Gastrocnemius medialis (tissue), 4 donors: ENCODE measurements at regions of chr19 and their contacts with region 1.

Region 1: DNA sequence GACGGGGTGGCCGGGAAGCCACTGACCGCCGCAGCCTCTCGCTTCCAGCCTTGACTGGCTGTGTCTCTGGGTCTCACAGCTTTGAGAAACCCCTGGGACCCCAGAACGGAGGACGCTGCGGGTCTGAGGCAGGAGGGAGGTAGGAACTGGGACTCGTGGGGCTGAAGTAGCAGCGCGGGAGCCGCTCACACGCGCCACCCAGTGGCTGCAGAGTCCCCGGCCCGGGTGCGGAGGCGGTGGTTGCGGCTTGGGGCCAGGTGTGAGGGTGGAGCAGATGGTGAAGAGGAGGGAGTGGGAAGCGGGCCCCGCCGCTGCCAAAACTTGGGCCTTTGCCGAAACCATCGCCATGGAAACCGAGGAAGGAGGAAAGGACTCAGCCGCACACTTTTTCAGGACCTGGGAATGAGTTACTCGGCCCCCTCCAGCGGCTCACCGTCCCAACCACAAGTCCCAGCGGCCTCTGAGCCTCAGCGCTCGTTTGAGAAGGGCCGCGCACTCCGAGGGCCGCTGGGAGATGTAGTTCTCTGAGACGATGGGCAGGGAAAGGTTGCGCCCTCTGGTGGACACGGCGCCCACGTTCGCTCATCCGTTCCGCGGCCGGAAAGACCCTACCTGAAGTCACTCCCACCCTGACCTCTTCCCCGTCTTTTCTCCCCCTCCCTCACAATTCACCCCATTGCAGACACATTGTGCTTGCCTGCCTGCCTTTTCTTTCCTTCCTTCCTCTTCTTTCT is 2.2 kb upstream of the SLC17A7 start:
- DNase-seq: peak; percentile 90 to 93
- ATAC-seq: peak; percentile 90 to 91
- H3K4me3 ChIP-seq: peak overlapping the region; percentile 61 to 99 (median 80)
- H3K27ac ChIP-seq: peak overlapping the region; percentile 73 to 85 (median 82)
- H3K4me1 ChIP-seq: no peaks in the 10 kb centered on the region
- H3K27me3 ChIP-seq: peaks cover 34 to 44% (median 37%) of the 10 kb centered on the region in 3 donors
- CTCF ChIP-seq: peak; percentile 78 to 92 (median 89)
- POLR2A ChIP-seq: no peak

Region 2: GRCh38 chr19:49224856-49225255 is 218.7 kb before region 1 on chr19:
- in situ Hi-C with region 1: loop called in 1 of 4 experiments (anchors 10 kb)
- intact Hi-C with region 1: loop called (anchors 1 kb)
- DNase-seq: peak in 1 of 2 donors; percentile 30
- ATAC-seq: peak; percentile 29 to 46
- H3K4me3 ChIP-seq: no peak overlapping the region
- H3K27ac ChIP-seq: no peak overlapping the region
- H3K4me1 ChIP-seq: no peaks in the 10 kb centered on the region
- H3K27me3 ChIP-seq: no peaks in the 10 kb centered on the region
- CTCF ChIP-seq: peak in 4 of 5 experiments; percentile 37 to 47 (median 45)
- POLR2A ChIP-seq: no peak

Region 3: GRCh38 chr19:49271080-49271762 is 172.3 kb before region 1 on chr19:
- in situ Hi-C with region 1: no loop called
- intact Hi-C with region 1: loop called (anchors 1 kb)
- DNase-seq: no peak
- ATAC-seq: no peak
- H3K4me3 ChIP-seq: no peak overlapping the region
- H3K27ac ChIP-seq: no peak overlapping the region
- H3K4me1 ChIP-seq: no peaks in the 10 kb centered on the region
- H3K27me3 ChIP-seq: peaks cover 0 to 3% (median 0%) of the 10 kb centered on the region in 3 donors
- CTCF ChIP-seq: no peak
- POLR2A ChIP-seq: no peak

Region 4: DNA sequence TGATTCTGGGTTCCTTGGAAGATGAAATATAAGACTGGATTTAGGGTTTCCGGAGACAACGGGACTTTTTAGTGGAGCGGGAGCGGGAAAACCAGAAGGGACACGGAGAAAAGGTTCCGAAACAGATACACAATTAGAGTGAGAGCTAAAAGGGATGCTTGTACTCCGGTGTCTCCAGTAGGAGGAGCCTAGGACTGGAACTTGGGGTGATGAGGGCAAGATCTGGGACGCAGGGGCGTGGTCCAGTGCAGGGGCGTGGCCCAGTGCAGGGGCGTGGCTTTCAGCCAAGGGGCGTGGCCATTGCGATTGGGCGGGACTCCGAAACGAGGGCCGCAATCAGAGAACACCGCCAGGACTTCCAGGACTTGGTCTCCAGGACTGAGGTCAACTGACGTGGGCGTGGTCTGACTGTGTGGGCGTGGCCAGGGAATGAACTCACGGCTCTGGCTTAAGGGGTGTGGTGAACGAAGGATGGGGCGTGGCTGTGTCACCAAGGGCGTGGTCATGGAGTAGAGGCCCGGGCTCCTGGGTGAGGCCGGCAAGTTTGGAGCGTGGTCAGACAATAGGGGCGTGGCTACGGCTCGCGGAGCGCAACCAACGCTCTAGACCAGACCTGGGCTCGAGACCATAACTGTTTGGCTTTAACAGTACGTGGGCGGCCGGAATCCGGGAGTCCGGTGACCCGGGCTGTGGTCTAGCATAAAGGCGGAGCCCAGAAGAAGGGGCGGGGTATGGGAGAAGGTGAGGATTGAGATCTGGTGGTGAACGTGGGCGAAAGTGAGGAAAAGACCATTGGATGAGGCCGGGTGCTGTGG is 80.1 kb before region 1 on chr19 and contains the start of gene DKKL1:
- in situ Hi-C with region 1: no loop called
- intact Hi-C with region 1: loop called (anchors 2 kb)
- DNase-seq: peak; percentile 94 to 95
- ATAC-seq: peak; percentile 84 to 91
- H3K4me3 ChIP-seq: peak within 1 kb of the TSS; percentile 68 to 72 (median 68)
- H3K27ac ChIP-seq: peak within 1 kb of the TSS; percentile 82 to 91 (median 84)
- H3K4me1 ChIP-seq: peaks cover 0 to 14% of the 10 kb centered on the region in 2 donors
- H3K27me3 ChIP-seq: peaks cover 5 to 31% (median 27%) of the 10 kb centered on the region in 3 donors
- CTCF ChIP-seq: no peak
- POLR2A ChIP-seq: peak; percentile 55 to 80
- total RNA-seq, gene DKKL1: not detected

Region 5: DNA sequence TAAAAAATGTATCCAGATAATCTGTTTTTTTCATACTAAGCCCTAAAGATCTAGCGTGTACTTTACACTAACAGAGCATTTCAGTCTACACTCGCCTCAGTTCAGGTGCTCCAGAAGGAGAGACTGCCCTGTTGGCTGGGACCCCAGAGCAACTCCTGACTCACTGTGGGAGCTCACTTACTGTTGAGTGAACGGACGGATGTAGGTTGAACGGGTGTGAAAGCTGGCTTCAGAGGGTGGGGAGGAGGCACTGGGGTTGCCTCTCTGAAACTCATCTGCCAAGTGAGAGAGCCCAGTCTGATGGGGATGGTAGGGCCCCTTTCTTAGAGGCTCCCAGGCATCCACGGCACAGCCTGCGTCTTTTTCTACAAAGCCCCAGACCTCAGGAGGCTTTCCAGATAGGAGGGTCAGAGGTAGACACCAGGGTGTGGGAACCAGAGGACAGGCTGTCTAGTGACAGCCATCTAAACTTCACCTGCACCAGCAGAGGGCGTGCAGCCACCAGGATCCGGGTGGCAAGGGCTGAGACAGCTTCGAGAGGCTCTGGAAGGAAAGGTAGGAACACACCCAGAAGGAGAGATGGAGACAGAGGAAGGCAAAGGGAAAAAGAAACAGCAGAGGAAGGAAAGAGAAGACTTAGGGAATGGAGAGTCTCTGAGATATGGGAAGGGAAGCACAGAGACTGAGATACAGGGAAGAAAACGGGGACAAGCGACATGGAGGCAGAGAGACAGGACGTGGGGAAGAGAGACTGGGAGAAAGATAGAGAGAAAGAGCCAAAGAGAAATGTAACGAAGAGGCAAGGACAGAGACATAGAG is 51.7 kb before region 1 on chr19:
- in situ Hi-C with region 1: loop called (anchors 5 to 10 kb)
- intact Hi-C with region 1: loop called (anchors 1 kb)
- DNase-seq: peak; percentile 62 to 63
- ATAC-seq: peak; percentile 88 to 91
- H3K4me3 ChIP-seq: no peak overlapping the region
- H3K27ac ChIP-seq: no peak overlapping the region
- H3K4me1 ChIP-seq: no peaks in the 10 kb centered on the region
- H3K27me3 ChIP-seq: peaks cover 0 to 14% (median 7%) of the 10 kb centered on the region in 3 donors
- CTCF ChIP-seq: peak; percentile 60 to 79 (median 75)
- POLR2A ChIP-seq: no peak

Region 6: GRCh38 chr19:49422407-49423070 is 21.0 kb before region 1 on chr19:
- in situ Hi-C with region 1: no loop called
- intact Hi-C with region 1: loop called (anchors 1 kb)
- DNase-seq: no peak
- ATAC-seq: no peak
- H3K4me3 ChIP-seq: peak overlapping the region; percentile 10 to 47 (median 30)
- H3K27ac ChIP-seq: no peak overlapping the region
- H3K4me1 ChIP-seq: peaks cover 13 to 21% of the 10 kb centered on the region in 2 donors
- H3K27me3 ChIP-seq: peaks cover 91 to 99% (median 94%) of the 10 kb centered on the region in 3 donors
- CTCF ChIP-seq: peak in 4 of 5 experiments; percentile 28 to 54 (median 36)
- POLR2A ChIP-seq: no peak

Region 7: GRCh38 chr19:49475995-49476880 is 32.7 kb after region 1 on chr19:
- in situ Hi-C with region 1: no loop called
- intact Hi-C with region 1: no loop called
- DNase-seq: no peak
- ATAC-seq: no peak
- H3K4me3 ChIP-seq: no peak overlapping the region
- H3K27ac ChIP-seq: peak overlapping the region in 2 of 4 donors; percentile 22 to 37
- H3K4me1 ChIP-seq: peaks cover 0 to 7% of the 10 kb centered on the region in 2 donors
- H3K27me3 ChIP-seq: no peaks in the 10 kb centered on the region
- CTCF ChIP-seq: no peak
- POLR2A ChIP-seq: no peak

Region 8: DNA sequence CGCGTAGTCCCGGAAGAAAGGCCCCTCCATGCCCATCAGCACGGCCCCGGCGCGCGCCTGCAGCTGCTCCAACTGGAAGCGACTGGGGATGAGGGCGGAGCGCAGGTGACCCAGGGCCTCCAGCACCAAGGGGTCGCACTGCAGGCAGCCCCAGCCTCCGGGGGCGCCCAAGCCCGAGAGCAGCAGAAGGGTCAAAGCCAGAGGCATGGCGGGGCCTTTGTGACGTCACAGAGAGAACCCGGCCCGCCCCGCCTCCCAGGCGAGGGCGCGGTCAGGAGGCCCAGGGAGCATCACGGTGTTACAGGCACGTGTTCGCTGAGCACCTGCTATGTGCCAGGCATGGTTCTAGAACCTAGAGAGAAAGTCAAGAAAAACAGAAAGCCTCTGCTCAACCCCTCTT is 719.5 kb after region 1 on chr19 and contains the start of gene IZUMO2:
- in situ Hi-C with region 1: no loop called
- intact Hi-C with region 1: no loop called
- DNase-seq: no peak
- ATAC-seq: no peak
- H3K4me3 ChIP-seq: no peak within 1 kb of the TSS
- H3K27ac ChIP-seq: no peak within 1 kb of the TSS
- H3K4me1 ChIP-seq: no peaks in the 10 kb centered on the region
- H3K27me3 ChIP-seq: peaks cover 4 to 20% (median 12%) of the 10 kb centered on the region in 3 donors
- CTCF ChIP-seq: no peak
- POLR2A ChIP-seq: no peak
- total RNA-seq, gene IZUMO2: not detected